ENCODE measurements at regions of chr1 and their contacts with region 1.

Region 1: GRCh38 chr1:7516341-7516740 is 254.8 kb upstream of the VAMP3 start:
- DNase-seq: peak; percentile 76
- H3K4me3 ChIP-seq: no peak overlapping the region
- H3K27ac ChIP-seq: peak overlapping the region in 1 of 2 experiments; percentile 34; a peak in 1 of 4 replicates
- H3K4me1 ChIP-seq: peaks cover 0 to 25% of the 10 kb centered on the region in 2 experiments; a peak in 1 of 4 replicates
- H3K27me3 ChIP-seq: no peaks in the 10 kb centered on the region
- CTCF ChIP-seq: 0 out of 2 replicates have a peak, but pooled peaks have one; percentile 13
- EP300 ChIP-seq: no peak
- RAD21 ChIP-seq: peak; percentile 64

Region 2: GRCh38 chr1:7526867-7527732 is 10.8 kb after region 1 on chr1:
- CTCF ChIA-PET with region 1: interaction called, 16 read pairs
- POLR2A ChIA-PET with region 1: no interaction called
- DNase-seq: no peak
- H3K4me3 ChIP-seq: no peak overlapping the region
- H3K27ac ChIP-seq: peak overlapping the region; percentile 48 to 56; a peak in 3 of 4 replicates
- H3K4me1 ChIP-seq: peaks cover 10 to 44% of the 10 kb centered on the region in 2 experiments; a peak in 3 of 4 replicates
- H3K27me3 ChIP-seq: no peaks in the 10 kb centered on the region
- CTCF ChIP-seq: no peak
- EP300 ChIP-seq: no peak
- RAD21 ChIP-seq: no peak